ENCODE measurements at regions of chr11 and their contacts with region 1.

Region 1: GRCh38 chr11:304915-305843 is 2.4 kb upstream of the IFITM2 start:
- DNase-seq: peak; percentile 78 to 83 (median 82)
- H3K4me3 ChIP-seq: no peak overlapping the region
- H3K27ac ChIP-seq: no peak overlapping the region
- H3K4me1 ChIP-seq: peaks cover 0 to 50% (median 41%) of the 10 kb centered on the region in 4 experiments
- H3K27me3 ChIP-seq: peaks cover 0 to 7% (median 0%) of the 10 kb centered on the region in 5 experiments

Region 2: GRCh38 chr11:250740-251299 is 54.4 kb before region 1 on chr11:
- CTCF ChIA-PET with region 1: interaction called, 23 read pairs
- POLR2A ChIA-PET with region 1: no interaction called
- DNase-seq: peak; percentile 52 to 78 (median 69)
- H3K4me3 ChIP-seq: no peak overlapping the region
- H3K27ac ChIP-seq: peak overlapping the region in 1 of 2 experiments; percentile 27
- H3K4me1 ChIP-seq: no peaks in the 10 kb centered on the region
- H3K27me3 ChIP-seq: no peaks in the 10 kb centered on the region

Region 3: GRCh38 chr11:288328-289144 is 16.6 kb before region 1 on chr11 and contains the start of gene PGGHG:
- CTCF ChIA-PET with region 1: interaction called, 14 read pairs
- POLR2A ChIA-PET with region 1: no interaction called
- DNase-seq: peak in 1 of 3 donors; percentile 42
- H3K4me3 ChIP-seq: peak within 1 kb of the TSS; percentile 40 to 75 (median 65)
- H3K27ac ChIP-seq: peak within 1 kb of the TSS in 1 of 2 experiments; percentile 43
- H3K4me1 ChIP-seq: peaks cover 0 to 23% (median 17%) of the 10 kb centered on the region in 4 experiments
- H3K27me3 ChIP-seq: peaks cover 0 to 23% (median 13%) of the 10 kb centered on the region in 5 experiments

Region 4: DNA sequence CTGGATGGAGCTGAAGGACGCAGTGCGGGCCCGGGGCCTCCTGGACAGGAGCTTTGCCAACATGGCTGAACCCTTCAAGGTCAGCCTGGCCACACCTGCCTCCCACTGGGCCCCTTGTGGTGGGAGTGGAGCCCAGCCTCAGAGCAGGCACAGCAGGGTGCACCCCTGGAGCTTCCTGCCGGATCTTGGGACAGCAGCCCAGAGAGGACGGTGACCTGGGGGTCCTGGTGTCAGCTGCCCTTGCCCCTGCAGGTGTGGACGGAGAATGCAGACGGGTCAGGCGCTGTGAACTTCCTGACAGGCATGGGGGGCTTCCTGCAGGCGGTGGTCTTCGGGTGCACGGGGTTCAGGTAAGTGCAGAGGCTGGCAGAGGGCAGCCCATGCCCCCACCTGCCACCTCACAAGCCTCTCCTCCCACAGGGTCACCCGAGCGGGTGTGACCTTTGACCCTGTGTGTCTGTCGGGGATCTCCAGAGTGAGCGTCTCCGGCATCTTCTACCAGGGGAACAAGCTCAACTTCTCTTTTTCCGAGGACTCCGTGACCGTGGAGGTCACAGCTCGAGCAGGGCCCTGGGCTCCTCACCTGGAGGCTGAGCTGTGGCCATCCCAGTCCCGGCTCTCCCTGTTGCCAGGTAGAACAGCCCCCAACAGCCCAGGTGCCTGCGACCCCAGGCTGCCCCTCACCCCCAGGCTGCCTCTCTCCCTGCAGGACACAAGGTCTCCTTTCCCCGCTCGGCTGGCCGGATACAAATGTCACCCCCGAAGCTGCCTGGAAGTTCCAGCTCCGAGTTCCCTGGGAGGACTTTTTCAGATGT is 11.1 kb before region 1 on chr11:
- CTCF ChIA-PET with region 1: interaction called, 14 read pairs
- POLR2A ChIA-PET with region 1: no interaction called
- DNase-seq: no peak
- H3K4me3 ChIP-seq: no peak overlapping the region
- H3K27ac ChIP-seq: no peak overlapping the region
- H3K4me1 ChIP-seq: peaks cover 0 to 11% (median 7%) of the 10 kb centered on the region in 4 experiments
- H3K27me3 ChIP-seq: peaks cover 0 to 15% (median 0%) of the 10 kb centered on the region in 5 experiments

Region 5: GRCh38 chr11:316031-316701 is 11.0 kb after region 1 on chr11:
- CTCF ChIA-PET with region 1: interaction called, 37 read pairs
- POLR2A ChIA-PET with region 1: interaction called, 3 read pairs
- DNase-seq: peak in 1 of 3 donors; percentile 24
- H3K4me3 ChIP-seq: peak overlapping the region in 3 of 7 experiments; percentile 4 to 79 (median 55)
- H3K27ac ChIP-seq: peak overlapping the region in 1 of 2 experiments; percentile 25
- H3K4me1 ChIP-seq: peaks cover 10 to 75% (median 65%) of the 10 kb centered on the region in 4 experiments
- H3K27me3 ChIP-seq: peaks cover 0 to 21% (median 0%) of the 10 kb centered on the region in 5 experiments

Region 6: GRCh38 chr11:355581-356458 is 50.6 kb after region 1 on chr11:
- CTCF ChIA-PET with region 1: interaction called, 36 read pairs
- POLR2A ChIA-PET with region 1: interaction called, 6 read pairs
- DNase-seq: peak; percentile 87 to 92 (median 92)
- H3K4me3 ChIP-seq: peak overlapping the region in 3 of 7 experiments; percentile 43 to 49 (median 43)
- H3K27ac ChIP-seq: peak overlapping the region; percentile 33 to 86
- H3K4me1 ChIP-seq: peaks cover 4 to 42% (median 24%) of the 10 kb centered on the region in 4 experiments
- H3K27me3 ChIP-seq: no peaks in the 10 kb centered on the region

Region 7: DNA sequence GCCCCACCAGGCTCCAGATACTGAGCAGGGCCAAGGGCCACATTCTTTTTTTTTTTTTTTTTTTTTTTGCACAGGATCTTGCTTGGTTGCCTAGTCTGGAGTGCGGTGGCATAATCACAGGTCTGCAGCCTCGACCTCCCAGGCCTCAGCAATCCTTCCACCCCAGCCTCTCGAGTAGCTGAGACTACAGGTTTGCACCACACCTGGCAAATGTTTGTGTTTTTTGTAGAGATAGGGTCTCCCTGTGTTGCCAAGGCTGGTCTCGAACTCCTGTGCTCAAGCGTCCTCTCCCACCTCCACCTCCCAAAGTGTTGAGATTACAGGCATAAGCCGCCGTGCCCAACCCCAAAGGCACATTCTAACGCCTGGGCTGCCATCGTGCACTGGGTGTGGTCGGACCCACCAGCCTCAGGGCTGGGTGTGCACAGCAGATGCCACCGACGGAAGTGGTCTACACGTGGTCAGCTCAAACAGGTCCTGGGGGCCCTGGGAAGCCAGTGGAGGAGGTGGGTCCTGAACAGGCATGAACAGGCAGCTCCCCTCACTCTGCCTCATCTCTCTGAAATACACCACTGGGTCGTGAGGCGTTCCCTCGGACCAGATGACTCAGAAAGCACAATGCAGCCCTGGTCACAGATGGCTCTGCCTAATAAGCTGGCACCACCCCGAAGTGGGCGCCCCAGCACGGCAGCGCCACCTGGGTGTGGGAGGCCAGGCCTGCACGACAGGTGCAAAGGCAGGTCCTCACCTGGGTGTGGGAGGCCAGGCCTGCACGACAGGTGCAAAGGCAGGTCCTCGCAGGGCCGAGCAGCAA is 59.0 kb after region 1 on chr11:
- CTCF ChIA-PET with region 1: interaction called, 36 read pairs
- POLR2A ChIA-PET with region 1: no interaction called
- DNase-seq: peak; percentile 43 to 66 (median 61)
- H3K4me3 ChIP-seq: no peak overlapping the region
- H3K27ac ChIP-seq: no peak overlapping the region
- H3K4me1 ChIP-seq: peaks cover 0 to 9% (median 6%) of the 10 kb centered on the region in 4 experiments
- H3K27me3 ChIP-seq: peaks cover 0 to 38% (median 20%) of the 10 kb centered on the region in 5 experiments

Region 8: DNA sequence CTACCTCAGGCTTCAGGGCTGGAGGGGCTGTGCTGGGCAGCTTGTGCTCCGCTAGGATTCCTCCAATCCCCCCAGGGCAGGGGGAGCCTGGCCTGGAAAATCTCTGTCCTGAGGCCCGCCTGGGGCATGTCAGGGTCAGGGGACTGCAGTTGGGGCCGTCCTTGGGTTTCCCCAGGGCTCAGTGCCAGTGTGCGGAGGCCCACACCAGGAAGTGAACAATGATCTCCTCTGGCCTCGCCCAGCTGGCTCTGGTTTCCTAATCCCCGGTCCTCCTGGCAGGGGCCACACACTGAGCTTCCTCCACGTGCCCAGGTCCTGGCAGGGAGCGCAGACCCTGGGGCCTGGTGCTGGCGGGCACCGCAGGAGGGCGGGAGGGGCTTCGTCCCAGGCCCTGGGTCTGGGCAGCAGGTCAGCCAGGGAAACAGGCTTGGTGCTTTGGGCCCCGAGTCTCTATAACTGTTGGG is 768.1 kb after region 1 on chr11:
- CTCF ChIA-PET with region 1: no interaction called
- POLR2A ChIA-PET with region 1: no interaction called
- DNase-seq: peak in 2 of 3 donors; percentile 31 to 44
- H3K4me3 ChIP-seq: no peak overlapping the region
- H3K27ac ChIP-seq: no peak overlapping the region
- H3K4me1 ChIP-seq: peaks cover 0 to 10% (median 5%) of the 10 kb centered on the region in 4 experiments
- H3K27me3 ChIP-seq: peaks cover 0 to 3% (median 0%) of the 10 kb centered on the region in 5 experiments

Measured in common myeloid progenitor, CD34-positive (primary cell).